ENCODE measurements at regions of chr9 and their contacts with region 1.

Region 1: DNA sequence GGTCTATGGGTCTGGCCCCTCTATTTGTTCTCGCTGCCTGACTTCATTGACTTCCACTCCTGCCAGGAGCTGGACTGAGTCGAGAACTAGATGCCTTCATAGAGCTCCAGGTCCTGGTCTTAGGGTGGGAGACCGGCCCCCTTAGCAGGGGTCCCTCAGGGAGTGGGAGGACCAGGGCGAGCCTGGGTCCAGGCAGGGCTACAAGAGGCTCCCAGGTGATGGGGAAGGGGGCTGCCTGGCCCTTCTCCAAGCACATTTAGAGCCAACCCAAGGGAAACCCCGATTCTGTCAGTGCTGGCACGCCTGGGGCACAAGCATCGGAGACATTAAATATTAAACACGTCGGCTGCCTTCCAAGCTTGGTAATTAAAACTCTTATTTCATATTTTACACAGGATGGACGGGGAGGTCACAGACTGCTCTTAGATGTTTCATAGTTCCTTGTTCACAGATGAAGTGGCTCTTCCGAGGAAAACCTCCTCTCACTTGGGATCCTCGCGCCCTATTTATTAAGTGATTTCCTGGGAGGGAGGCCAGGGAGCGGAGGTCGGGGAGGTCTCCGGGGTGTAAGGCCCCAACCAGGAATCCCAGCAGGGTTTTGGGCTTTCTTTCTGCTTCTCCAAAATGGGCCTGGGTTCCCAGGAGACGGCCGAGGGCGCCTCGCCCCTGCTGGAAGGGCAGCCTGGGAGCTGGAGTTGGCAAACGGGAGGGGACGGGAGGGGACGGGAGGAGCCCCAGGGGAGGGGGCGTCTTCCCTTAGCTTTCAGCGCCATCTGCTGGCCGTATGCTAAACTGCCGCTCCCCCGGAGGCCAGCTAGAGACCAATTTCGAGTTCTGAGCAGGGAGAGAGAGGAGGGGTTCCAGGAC is 23.4 kb upstream of the ZBTB43 start:
- DNase-seq: peak; percentile 74 to 90 (median 84)
- H3K4me3 ChIP-seq: peak overlapping the region in 29 of 59 donors; percentile 13 to 48 (median 27)
- H3K27ac ChIP-seq: peak overlapping the region in 1 of 59 donors; percentile 31
- H3K27me3 ChIP-seq: peaks cover 0 to 24% (median 0%) of the 10 kb centered on the region in 45 donors
- CTCF ChIP-seq: peak; percentile 76 to 100 (median 97)

Region 2: DNA sequence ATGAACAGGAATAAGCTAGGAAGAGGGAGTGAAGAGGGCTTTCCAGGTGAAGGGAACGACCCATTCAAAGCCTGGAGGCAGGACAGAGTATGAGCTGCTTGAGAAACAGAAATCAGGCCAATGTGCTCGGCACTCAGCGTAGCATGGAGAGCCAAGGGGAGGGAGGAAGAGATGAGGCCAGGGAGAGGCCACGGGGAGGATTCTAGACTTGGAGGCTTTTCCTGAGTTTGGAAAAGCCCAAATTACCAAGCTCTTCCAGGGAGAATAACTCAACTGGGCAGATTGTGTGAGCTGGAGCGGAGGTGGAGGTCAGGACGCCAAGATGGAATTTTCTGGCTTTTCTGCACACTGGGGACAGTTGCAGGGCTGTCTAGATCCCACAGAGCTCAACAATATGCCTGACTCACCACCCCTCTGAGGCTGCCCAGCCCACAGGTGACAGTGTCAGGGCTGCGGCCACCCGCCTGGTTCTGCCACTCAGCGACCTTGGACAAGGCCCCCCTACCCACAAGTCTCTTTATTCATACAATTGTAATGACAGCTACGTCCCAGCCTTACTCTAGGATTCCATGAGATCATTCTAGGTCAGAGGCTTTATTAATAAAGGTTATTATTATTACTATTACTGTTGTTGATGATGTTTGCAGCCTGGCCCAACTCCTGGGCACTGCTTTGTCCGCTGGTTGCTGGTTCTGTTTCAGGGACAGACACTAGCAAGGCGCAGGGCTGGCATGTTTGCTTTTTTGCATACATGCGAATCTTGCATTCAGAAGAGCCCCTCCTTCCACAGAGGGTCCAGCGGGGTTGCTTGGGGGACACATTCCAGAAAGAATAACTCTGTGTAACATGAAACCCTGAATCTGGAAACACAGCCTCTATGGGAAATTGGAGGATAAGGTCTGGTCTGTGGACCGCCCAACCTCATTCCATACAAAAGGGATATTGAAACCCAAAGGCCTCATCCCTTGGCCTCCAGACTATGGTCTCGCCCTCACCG is 177.1 kb before region 1 on chr9:
- intact Hi-C with region 1: loop called (anchors 2 to 5 kb)
- DNase-seq: no peak
- H3K4me3 ChIP-seq: no peak overlapping the region
- H3K27ac ChIP-seq: no peak overlapping the region
- H3K27me3 ChIP-seq: peaks cover 0 to 7% (median 0%) of the 10 kb centered on the region in 45 donors
- CTCF ChIP-seq: no peak

Region 3: DNA sequence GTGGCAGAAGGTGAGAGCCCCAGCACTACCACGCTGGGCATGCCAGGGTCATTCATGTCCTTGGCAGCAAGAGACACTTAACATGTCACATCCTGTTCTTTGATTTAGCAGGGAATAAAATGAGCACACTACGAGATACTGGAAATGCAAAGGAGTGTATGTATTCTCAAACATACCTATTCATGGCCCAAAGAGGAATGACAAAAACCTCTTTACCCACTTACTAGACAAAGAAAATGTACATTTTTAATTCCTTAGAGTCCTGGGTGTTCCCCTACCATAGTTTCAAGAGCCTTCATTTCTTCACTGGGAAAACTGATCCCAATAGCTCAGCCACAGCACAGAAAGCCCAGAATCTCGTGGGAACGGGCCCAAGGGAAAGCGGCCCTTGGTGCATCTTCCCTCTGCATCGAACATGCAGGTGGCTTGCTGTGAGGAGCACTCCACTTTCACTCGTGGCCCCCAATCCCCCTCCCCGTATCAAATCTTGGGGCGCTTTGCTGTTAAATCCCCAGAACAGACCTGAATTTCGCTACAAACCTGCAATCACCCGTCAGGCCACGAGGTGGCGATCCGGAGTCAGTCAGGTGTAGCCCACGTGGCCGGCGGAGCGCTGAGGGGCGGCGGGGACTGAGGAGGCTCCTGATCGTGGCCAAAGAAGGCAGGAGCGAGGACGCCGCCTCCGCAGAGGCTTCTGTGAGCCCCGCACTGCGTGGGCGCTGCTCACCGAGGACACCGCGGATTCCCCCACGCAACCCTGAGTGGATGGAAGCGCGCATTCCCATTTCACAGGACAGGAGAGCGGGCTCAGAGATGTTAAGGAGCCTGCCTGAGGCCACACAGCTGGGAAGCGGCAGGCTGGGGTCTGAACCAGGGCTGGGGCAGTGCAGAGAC is 76.3 kb before region 1 on chr9:
- intact Hi-C with region 1: loop called (anchors 1 to 2 kb)
- DNase-seq: peak; percentile 70 to 87 (median 80)
- H3K4me3 ChIP-seq: peak overlapping the region in 58 of 59 donors; percentile 15 to 66 (median 45)
- H3K27ac ChIP-seq: peak overlapping the region in 52 of 59 donors; percentile 13 to 93 (median 76)
- H3K27me3 ChIP-seq: peaks cover 0 to 46% (median 10%) of the 10 kb centered on the region in 45 donors
- CTCF ChIP-seq: peak; percentile 80 to 97 (median 92)

Region 4: DNA sequence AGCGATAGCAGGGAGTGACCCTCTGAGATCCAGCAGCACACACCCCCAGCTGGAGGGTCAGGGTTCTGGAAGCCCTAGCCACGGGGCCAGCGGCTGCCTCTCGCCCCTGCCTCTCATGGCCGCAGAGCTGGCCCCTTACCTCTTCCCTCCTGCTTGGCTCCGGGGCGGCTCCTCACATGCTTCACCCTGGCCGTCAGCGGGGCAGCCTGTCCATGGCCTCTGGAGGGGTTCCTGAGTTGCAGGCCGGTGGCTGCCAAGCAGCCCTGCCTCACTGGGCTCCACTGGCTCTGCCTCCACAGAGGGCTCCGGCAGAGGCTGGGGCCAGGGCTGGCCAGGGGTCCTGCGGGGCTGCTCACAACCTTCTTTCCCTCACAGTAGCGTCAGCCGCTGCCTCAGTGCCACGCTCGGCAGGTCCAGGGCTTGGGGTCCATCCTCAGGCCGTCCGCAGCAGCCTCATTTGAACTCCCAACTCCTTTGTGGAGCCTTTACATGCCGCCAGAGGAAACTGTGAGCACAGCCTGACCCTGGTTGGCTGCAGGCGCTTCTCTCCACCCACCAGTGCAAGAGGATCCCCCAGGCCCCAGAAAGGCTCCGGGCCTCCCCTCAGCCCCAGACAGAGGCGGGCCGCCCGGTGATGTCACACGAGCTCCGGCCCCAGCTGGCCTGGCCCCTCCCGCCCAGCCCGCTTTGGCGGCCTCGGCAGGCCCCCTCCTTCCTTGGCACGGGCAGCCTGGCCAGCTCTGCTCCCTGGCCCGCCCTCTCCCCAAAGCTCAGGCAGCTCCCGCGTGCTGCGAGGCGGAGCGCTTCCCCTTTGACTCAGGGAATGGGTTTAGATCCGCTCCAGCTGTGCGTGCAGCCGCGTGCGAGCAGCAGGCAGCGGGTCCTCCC is 341.0 kb after region 1 on chr9 and contains the start of gene ANGPTL2:
- intact Hi-C with region 1: no loop called
- DNase-seq: peak; percentile 78 to 94 (median 90)
- H3K4me3 ChIP-seq: peak within 1 kb of the TSS; percentile 32 to 80 (median 62)
- H3K27ac ChIP-seq: peak within 1 kb of the TSS; percentile 13 to 95 (median 90)
- H3K27me3 ChIP-seq: no peaks in the 10 kb centered on the region
- CTCF ChIP-seq: peak in 16 of 56 donors; percentile 5 to 50 (median 18)
- total RNA-seq, gene ANGPTL2: 1.8 to 27.8 (median 7.2) TPM